ENCODE measurements at regions of chr12 and their contacts with region 1.

Region 1: GRCh38 chr12:76232013-76232412 is 116.2 kb downstream of the BBS10 start:
- DNase-seq: no peak
- H3K4me3 ChIP-seq: no peak overlapping the region
- H3K27ac ChIP-seq: no peak overlapping the region
- H3K4me1 ChIP-seq: no peaks in the 10 kb centered on the region
- H3K27me3 ChIP-seq: no peaks in the 10 kb centered on the region
- CTCF ChIP-seq: no peak
- POLR2A ChIP-seq: no peak

Region 2: DNA sequence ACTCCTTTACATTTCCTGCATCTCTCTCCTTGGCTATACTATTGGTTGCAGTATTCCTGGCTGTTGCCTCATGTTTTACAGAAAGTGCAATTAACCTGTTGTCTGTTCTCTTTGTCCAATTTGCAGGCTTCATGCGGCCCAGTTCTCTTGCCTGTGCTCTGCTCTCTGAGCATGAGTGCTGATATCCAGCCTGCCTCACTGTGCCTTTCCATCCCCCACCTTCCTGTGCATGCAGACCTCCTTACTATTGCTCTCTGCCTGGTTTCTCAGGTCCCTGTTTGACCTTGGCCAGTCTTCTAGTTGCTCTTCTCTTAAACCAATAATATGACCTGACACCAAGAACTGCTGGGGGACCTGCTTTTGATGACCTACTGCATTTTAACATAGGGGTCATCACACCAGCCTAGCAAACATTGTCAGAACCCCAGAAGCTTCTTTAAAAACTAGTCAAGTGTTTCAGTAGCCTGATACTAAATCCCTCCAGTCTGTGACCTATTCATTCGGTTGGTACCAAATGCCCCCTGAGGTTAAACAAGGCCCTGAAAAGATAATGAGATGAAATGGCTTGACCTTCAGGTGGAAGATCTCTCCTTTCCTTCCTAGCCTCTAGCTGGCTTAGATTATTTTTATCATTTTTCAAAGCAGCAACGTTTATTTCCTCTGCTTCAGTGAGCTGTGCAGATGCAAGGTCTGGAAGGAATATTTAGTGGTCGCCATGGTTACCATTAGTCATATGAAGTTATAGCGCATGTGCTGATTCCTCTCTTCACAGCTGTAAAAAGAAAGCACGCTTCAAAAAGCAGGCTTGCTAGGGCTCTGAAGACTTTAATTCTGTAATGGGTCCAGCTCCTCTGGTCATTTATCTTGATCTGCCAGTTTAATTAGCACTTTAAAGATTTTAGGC is 416.9 kb before region 1 on chr12:
- intact Hi-C with region 1: no loop called
- DNase-seq: no peak
- H3K4me3 ChIP-seq: no peak overlapping the region
- H3K27ac ChIP-seq: peak overlapping the region; percentile 46 to 51
- H3K4me1 ChIP-seq: no peaks in the 10 kb centered on the region
- H3K27me3 ChIP-seq: no peaks in the 10 kb centered on the region
- CTCF ChIP-seq: no peak
- POLR2A ChIP-seq: no peak

Region 3: DNA sequence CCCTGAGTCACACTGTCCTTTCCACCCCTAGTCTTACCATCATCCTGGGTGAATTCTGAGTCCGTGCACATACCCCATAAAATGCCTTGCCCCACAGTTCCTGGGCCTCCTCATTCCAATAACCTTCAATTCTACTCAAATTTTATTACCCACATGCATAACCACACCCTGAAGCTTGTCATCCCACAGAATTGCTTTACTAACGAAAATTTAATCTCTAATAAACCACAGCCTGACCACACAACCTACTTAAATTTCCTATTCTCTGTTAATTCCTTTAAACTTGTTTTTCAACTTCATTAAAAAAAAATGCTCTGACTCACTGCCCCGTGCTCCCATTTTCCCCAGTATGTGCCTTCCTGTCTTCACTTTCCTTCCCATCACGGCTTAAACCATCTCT is 406.3 kb before region 1 on chr12:
- intact Hi-C with region 1: no loop called
- DNase-seq: no peak
- H3K4me3 ChIP-seq: no peak overlapping the region
- H3K27ac ChIP-seq: no peak overlapping the region
- H3K4me1 ChIP-seq: no peaks in the 10 kb centered on the region
- H3K27me3 ChIP-seq: no peaks in the 10 kb centered on the region
- CTCF ChIP-seq: no peak
- POLR2A ChIP-seq: no peak

Region 4: GRCh38 chr12:76426160-76426559 is 194.1 kb after region 1 on chr12:
- intact Hi-C with region 1: loop called (anchors 5 kb)
- DNase-seq: no peak
- H3K4me3 ChIP-seq: no peak overlapping the region
- H3K27ac ChIP-seq: no peak overlapping the region
- H3K4me1 ChIP-seq: no peaks in the 10 kb centered on the region
- H3K27me3 ChIP-seq: no peaks in the 10 kb centered on the region
- CTCF ChIP-seq: no peak
- POLR2A ChIP-seq: no peak

Measured in breast epithelium (tissue), 4 donors.